ENCODE measurements at regions of chr5 and their contacts with region 1.

Region 1: DNA sequence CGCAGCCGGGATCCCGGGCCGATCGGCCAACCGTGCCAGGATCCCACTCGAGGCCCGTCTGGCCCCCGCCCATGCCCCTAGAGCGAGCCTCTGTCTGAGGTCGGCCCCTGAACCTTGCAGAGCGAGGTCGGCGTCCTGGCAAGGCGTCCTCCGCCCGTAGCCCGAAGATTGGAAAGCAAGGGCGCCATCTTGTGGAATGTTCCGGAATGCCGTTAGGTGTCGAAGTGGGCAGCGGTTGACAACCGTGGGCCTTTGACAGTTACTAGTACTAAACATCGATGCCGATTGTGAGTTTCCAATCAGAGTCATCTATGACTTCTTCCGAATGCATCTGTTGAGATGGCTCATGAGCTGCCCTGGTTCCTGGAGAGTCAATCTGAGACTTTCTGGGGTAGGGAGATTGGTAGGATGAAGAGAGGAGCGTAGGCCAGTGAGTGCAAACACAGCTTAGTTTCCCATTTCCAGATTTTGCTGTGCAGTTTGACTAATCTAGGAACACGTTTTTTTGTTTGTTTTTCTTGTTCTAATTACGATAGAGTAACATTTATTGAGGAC is 923 bp upstream of the PLK2 start:
- DNase-seq: peak; percentile 87 to 90
- H3K4me3 ChIP-seq: peak overlapping the region; percentile 83 to 93 (median 90)
- H3K27ac ChIP-seq: peak overlapping the region; percentile 98 to 99
- H3K4me1 ChIP-seq: peaks cover 0 to 4% of the 10 kb centered on the region in 2 donors
- H3K27me3 ChIP-seq: no peaks in the 10 kb centered on the region
- CTCF ChIP-seq: peak; percentile 61 to 85 (median 75)
- POLR2A ChIP-seq: no peak

Region 2: GRCh38 chr5:57779383-57780223 is 681.2 kb before region 1 on chr5:
- intact Hi-C with region 1: loop called (anchors 5 kb)
- DNase-seq: peak in 1 of 2 donors; percentile 29
- H3K4me3 ChIP-seq: no peak overlapping the region
- H3K27ac ChIP-seq: no peak overlapping the region
- H3K4me1 ChIP-seq: no peaks in the 10 kb centered on the region
- H3K27me3 ChIP-seq: no peaks in the 10 kb centered on the region
- CTCF ChIP-seq: peak in 2 of 3 donors; percentile 68 to 70
- POLR2A ChIP-seq: no peak

Region 3: DNA sequence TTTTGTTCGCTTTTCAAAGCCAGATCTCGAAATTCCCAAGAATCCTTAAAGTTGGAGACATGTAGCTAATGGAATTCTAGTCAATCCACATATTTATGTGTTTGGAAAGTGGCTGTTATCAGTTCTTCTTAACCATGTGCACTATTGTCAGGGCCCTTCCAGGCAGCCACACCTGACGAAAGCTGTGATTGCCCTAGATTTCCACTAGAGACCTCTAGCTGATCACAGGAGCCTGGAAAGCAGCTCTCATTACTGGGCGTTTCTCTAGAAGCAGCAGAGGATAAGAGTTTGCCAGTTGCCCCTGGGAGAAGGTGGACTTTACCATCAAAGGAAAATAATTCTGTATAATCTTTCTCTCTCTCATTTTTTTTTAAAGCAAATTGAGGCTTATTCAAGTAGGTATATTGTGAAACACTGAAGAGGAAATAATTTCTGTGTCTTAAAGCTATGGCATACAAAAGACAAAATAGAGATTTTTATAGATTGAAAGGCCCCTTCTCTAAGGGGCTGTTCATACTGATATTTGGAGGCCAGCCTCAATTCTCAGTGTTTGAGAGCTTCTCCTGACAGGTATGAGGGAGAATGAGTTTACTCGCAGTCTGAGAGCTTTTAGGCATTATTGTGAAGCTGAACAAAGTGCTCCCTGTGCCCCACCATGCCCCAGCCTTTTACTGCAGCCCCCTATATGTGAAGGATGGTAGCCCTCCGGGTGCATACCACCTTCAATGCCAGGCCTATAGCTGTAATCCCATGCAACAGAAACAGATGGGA is 572.8 kb before region 1 on chr5:
- intact Hi-C with region 1: loop called (anchors 5 kb)
- DNase-seq: peak in 1 of 2 donors; percentile 52
- H3K4me3 ChIP-seq: no peak overlapping the region
- H3K27ac ChIP-seq: no peak overlapping the region
- H3K4me1 ChIP-seq: no peaks in the 10 kb centered on the region
- H3K27me3 ChIP-seq: no peaks in the 10 kb centered on the region
- CTCF ChIP-seq: peak; percentile 20 to 69 (median 63)
- POLR2A ChIP-seq: no peak

Region 4: DNA sequence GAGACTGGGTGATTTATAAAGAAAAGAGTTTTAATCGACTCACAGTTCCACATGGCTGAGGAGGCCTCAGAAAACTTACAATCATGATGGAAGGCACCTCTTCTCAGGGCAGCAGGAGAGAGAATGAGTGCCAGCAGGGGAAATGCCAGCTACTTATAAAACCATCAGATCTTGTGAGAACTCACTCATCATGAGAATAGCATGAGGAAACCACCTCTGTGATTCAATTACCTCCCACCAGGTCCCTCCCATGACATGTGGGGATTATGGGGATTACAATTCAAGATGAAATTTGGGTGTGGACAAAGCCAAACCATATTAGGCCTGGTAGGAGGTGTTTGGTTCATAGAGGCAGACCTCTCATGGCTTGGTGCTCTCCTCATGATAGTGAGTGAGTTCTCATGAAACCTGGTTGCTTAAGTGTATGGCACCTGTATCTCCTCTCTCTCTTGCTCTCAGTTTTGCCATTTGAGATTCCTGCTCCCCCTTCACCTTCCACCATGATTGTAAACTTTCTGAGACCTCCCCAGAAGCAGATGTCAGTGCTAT is 70.2 kb after region 1 on chr5:
- intact Hi-C with region 1: no loop called
- DNase-seq: no peak
- H3K4me3 ChIP-seq: no peak overlapping the region
- H3K27ac ChIP-seq: no peak overlapping the region
- H3K4me1 ChIP-seq: no peaks in the 10 kb centered on the region
- H3K27me3 ChIP-seq: no peaks in the 10 kb centered on the region
- CTCF ChIP-seq: no peak
- POLR2A ChIP-seq: no peak